Heart right ventricle (tissue), 16 donors: ENCODE measurements at regions of chr7 and their contacts with region 1.

Region 1: GRCh38 chr7:55100544-55101301 is 81.9 kb downstream of the EGFR start:
- DNase-seq: peak; percentile 83 to 92
- ATAC-seq: peak; percentile 84 to 91 (median 88)
- H3K4me3 ChIP-seq: peak overlapping the region in 1 of 10 donors; percentile 2
- H3K27ac ChIP-seq: peak overlapping the region in 9 of 10 donors; percentile 50 to 87 (median 73)
- H3K4me1 ChIP-seq: peaks cover 8 to 70% (median 28%) of the 10 kb centered on the region in 9 donors
- H3K27me3 ChIP-seq: no peaks in the 10 kb centered on the region
- CTCF ChIP-seq: no peak

Region 2: GRCh38 chr7:55160539-55160938 is 59.8 kb after region 1 on chr7:
- intact Hi-C with region 1: loop called in 1 of 10 experiments (anchors 10 kb)
- DNase-seq: no peak
- ATAC-seq: no peak
- H3K4me3 ChIP-seq: no peak overlapping the region
- H3K27ac ChIP-seq: no peak overlapping the region
- H3K4me1 ChIP-seq: peaks cover 0 to 19% (median 0%) of the 10 kb centered on the region in 9 donors
- H3K27me3 ChIP-seq: no peaks in the 10 kb centered on the region
- CTCF ChIP-seq: no peak